Panc1 (cell line): ENCODE measurements at regions of chr7 and their contacts with region 1.

Region 1: GRCh38 chr7:150753826-150754603 is 16.8 kb downstream of the GIMAP5 start:
- DNase-seq: no peak
- ATAC-seq: no peak
- H3K4me3 ChIP-seq: no peak overlapping the region
- H3K27ac ChIP-seq: no peak overlapping the region
- H3K4me1 ChIP-seq: no peaks in the 10 kb centered on the region
- H3K27me3 ChIP-seq: peaks cover 9% of the 10 kb centered on the region
- CTCF ChIP-seq: peak; percentile 30; the same call in 1 of the 2 replicates

Region 2: GRCh38 chr7:150448789-150449147 is 305.2 kb before region 1 on chr7:
- CTCF ChIA-PET with region 1: no interaction called
- POLR2A ChIA-PET with region 1: no interaction called
- in situ Hi-C with region 1: no loop called
- intact Hi-C with region 1: loop called (anchors 5 kb)
- DNase-seq: peak; percentile 52
- ATAC-seq: peak; percentile 86
- H3K4me3 ChIP-seq: no peak overlapping the region
- H3K27ac ChIP-seq: no peak overlapping the region
- H3K4me1 ChIP-seq: no peaks in the 10 kb centered on the region; the same call in 1 of the 2 replicates
- H3K27me3 ChIP-seq: peaks cover 6% of the 10 kb centered on the region
- CTCF ChIP-seq: peak; percentile 97